ENCODE measurements at regions of chr1 and their contacts with region 1.

Region 1: GRCh38 chr1:42936309-42937078 is 22.2 kb downstream of the SLC2A1 start:
- DNase-seq: peak; percentile 60
- ATAC-seq: peak; percentile 45
- H3K4me3 Mint-ChIP-seq: no peak overlapping the region
- H3K27ac Mint-ChIP-seq: peak overlapping the region; percentile 79
- H3K4me1 Mint-ChIP-seq: peaks cover 94% of the 10 kb centered on the region
- H3K27me3 Mint-ChIP-seq: no peaks in the 10 kb centered on the region
- CTCF ChIP-seq: no peak

Region 2: GRCh38 chr1:42949312-42950145 is 13.0 kb after region 1 on chr1:
- CTCF ChIA-PET with region 1: interaction called, 7 read pairs
- POLR2A ChIA-PET with region 1: interaction called, 117 read pairs
- intact Hi-C with region 1: no loop called
- DNase-seq: no peak
- ATAC-seq: no peak
- H3K4me3 Mint-ChIP-seq: peak overlapping the region; percentile 26
- H3K27ac Mint-ChIP-seq: peak overlapping the region; percentile 72
- H3K4me1 Mint-ChIP-seq: peaks cover 95% of the 10 kb centered on the region
- H3K27me3 Mint-ChIP-seq: no peaks in the 10 kb centered on the region
- CTCF ChIP-seq: no peak

Region 3: GRCh38 chr1:43121256-43121900 is 184.9 kb after region 1 on chr1:
- CTCF ChIA-PET with region 1: no interaction called
- POLR2A ChIA-PET with region 1: no interaction called
- intact Hi-C with region 1: no loop called
- DNase-seq: no peak
- ATAC-seq: no peak
- H3K4me3 Mint-ChIP-seq: no peak overlapping the region
- H3K27ac Mint-ChIP-seq: no peak overlapping the region
- H3K4me1 Mint-ChIP-seq: no peaks in the 10 kb centered on the region
- H3K27me3 Mint-ChIP-seq: peaks cover 11% of the 10 kb centered on the region
- CTCF ChIP-seq: no peak